CD8-positive, alpha-beta T cell (primary cell): ENCODE measurements at regions of chr1 and their contacts with region 1.

Region 1: DNA sequence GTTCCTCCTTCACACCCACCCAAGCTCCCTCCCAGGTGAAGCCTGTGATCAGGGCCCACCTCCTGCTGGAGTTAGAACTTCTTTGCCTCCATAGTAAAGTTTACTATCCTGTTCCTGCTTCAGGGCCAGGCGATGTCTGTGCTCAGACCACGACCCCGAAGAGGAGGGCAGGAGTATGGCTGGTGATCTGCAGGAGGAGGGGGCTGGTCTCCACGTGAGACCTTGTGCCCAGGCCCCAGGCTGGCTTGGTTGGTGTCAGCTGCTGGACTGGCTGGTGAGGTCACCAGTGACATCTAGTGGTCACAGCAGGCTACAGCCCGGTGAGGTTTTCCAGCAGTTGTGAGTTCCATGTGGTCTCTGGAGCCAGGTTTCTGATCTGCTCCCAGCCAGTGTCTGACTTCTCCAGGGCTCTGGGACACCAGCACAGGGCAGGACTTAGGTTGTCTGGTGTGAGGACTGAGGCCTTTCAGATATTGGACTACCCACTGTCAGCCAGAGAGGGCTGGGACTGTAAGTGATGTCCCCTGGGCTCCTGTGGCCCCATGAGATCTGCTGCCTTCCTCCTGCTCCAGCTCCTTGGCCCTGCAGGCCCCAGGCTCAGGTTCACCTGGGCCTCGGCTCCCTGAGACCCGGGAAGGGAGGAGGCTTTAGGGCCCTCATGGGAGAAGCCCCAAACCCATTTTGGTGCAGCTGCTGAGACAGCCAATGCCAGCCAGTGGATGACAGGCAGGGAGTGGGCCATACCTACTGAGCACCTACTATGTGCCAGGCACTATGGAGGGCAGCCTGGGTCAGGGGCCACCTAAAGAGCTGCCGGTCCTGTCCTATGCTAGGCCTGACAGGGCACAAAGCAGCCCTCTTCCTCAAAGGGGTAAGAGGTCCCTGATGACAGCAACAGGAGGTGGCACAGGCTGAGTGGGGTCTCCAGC is 6.0 kb upstream of the UBL4B start:
- DNase-seq: peak; percentile 24 to 72 (median 52)
- ATAC-seq: peak; percentile 64
- H3K4me3 ChIP-seq: no peak overlapping the region
- H3K4me3 Mint-ChIP-seq: no peak overlapping the region
- H3K27ac ChIP-seq: no peak overlapping the region
- H3K27ac Mint-ChIP-seq: no peak overlapping the region
- H3K4me1 ChIP-seq: no peaks in the 10 kb centered on the region
- H3K4me1 Mint-ChIP-seq: no peaks in the 10 kb centered on the region
- H3K27me3 ChIP-seq: no peaks in the 10 kb centered on the region
- H3K27me3 Mint-ChIP-seq: peaks cover 7% of the 10 kb centered on the region
- CTCF ChIP-seq: peak; percentile 69

Region 2: DNA sequence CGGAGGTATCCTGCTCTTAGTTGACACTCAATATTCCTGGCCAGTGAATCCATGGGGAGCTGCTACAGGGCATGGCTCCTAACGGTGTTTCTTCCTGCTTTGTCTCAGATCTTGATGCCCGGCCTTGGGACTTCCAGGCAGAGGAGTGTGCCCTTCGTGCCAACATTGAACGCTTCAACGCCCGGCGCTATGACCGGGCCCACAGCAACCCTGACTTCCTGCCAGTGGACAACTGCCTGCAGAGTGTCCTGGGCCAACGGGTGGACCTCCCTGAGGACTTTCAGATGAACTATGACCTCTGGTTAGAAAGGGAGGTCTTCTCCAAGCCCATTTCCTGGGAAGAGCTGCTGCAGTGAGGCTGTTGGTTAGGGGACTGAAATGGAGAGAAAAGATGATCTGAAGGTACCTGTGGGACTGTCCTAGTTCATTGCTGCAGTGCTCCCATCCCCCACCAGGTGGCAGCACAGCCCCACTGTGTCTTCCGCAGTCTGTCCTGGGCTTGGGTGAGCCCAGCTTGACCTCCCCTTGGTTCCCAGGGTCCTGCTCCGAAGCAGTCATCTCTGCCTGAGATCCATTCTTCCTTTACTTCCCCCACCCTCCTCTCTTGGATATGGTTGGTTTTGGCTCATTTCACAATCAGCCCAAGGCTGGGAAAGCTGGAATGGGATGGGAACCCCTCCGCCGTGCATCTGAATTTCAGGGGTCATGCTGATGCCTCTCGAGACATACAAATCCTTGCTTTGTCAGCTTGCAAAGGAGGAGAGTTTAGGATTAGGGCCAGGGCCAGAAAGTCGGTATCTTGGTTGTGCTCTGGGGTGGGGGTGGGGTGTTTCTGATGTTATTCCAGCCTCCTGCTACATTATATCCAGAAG is 52.5 kb before region 1 on chr1:
- CTCF ChIA-PET with region 1: interaction called, 55 read pairs
- POLR2A ChIA-PET with region 1: no interaction called
- intact Hi-C with region 1: loop called in 1 of 2 experiments (anchors 1 kb)
- DNase-seq: peak; percentile 29 to 79 (median 70)
- ATAC-seq: peak; percentile 92
- H3K4me3 ChIP-seq: no peak overlapping the region
- H3K4me3 Mint-ChIP-seq: no peak overlapping the region
- H3K27ac ChIP-seq: no peak overlapping the region
- H3K27ac Mint-ChIP-seq: no peak overlapping the region
- H3K4me1 ChIP-seq: no peaks in the 10 kb centered on the region
- H3K4me1 Mint-ChIP-seq: no peaks in the 10 kb centered on the region
- H3K27me3 ChIP-seq: no peaks in the 10 kb centered on the region
- H3K27me3 Mint-ChIP-seq: no peaks in the 10 kb centered on the region
- CTCF ChIP-seq: peak; percentile 85

Region 3: DNA sequence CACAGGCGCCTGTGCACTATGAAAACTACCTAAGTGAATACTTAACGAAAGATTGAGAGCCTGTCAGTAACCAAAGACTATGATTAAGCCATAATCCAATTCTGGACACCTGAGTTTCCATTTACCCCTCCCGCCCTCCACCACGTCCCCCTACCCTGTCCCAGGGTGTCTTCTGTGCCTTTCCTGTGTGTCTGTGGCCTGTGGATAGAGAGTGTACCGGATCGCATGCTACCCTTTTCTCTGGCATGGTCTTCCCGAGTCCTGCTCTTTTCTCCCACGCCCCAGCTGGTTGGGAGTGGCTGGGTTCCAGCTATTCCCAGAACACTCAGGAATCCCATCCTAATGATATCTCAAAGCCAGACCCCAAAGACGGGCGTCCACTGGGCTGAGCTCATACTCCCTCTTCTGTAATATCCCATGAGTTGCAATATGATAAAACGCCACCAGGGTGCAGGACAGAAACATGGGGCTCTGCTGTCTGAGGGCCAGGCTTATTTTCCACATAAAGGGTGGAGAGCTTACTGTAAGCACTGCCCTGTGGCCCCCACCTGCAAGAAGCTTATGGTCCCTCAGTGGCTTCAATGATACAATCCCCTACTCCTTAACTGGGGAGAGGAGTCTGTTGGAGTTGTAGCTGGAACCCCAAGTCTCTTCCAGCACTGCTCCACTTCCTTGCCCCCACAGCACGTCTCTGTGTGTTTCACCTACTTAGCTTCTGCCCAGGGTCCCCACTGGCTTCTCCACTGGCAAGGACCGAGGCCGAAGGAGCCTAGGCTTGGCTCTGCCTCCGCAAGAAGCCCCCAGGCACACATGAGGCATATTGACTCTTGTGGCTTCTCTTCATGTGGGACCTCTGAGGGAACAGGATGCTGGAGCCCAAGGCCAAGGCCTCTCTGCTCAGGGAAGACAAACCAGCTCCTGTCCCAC is 18.2 kb before region 1 on chr1:
- CTCF ChIA-PET with region 1: interaction called, 72 read pairs
- POLR2A ChIA-PET with region 1: no interaction called
- intact Hi-C with region 1: loop called in 1 of 2 experiments (anchors 1 kb)
- DNase-seq: peak in 4 of 9 experiments; percentile 34 to 62 (median 54)
- ATAC-seq: peak; percentile 77
- H3K4me3 ChIP-seq: no peak overlapping the region
- H3K4me3 Mint-ChIP-seq: no peak overlapping the region
- H3K27ac ChIP-seq: no peak overlapping the region
- H3K27ac Mint-ChIP-seq: no peak overlapping the region
- H3K4me1 ChIP-seq: peaks cover 8% of the 10 kb centered on the region
- H3K4me1 Mint-ChIP-seq: peaks cover 13% of the 10 kb centered on the region
- H3K27me3 ChIP-seq: peaks cover 7 to 12% of the 10 kb centered on the region in 2 experiments
- H3K27me3 Mint-ChIP-seq: peaks cover 43% of the 10 kb centered on the region
- CTCF ChIP-seq: peak; percentile 68

Region 4: GRCh38 chr1:110118636-110119615 is 12.6 kb after region 1 on chr1:
- CTCF ChIA-PET with region 1: interaction called, 44 read pairs
- POLR2A ChIA-PET with region 1: no interaction called
- intact Hi-C with region 1: no loop called
- DNase-seq: no peak
- ATAC-seq: no peak
- H3K4me3 ChIP-seq: no peak overlapping the region
- H3K4me3 Mint-ChIP-seq: no peak overlapping the region
- H3K27ac ChIP-seq: no peak overlapping the region
- H3K27ac Mint-ChIP-seq: no peak overlapping the region
- H3K4me1 ChIP-seq: no peaks in the 10 kb centered on the region
- H3K4me1 Mint-ChIP-seq: peaks cover 3% of the 10 kb centered on the region
- H3K27me3 ChIP-seq: peaks cover 0 to 4% of the 10 kb centered on the region in 2 experiments
- H3K27me3 Mint-ChIP-seq: peaks cover 30% of the 10 kb centered on the region
- CTCF ChIP-seq: no peak